Activated CD4-positive, alpha-beta T cell treated with anti-CD3 and anti-CD28 coated beads, Interleukin-2, amount 10 ng/mL, durations not matched to agents 24 days and 14 days (primary cell): ENCODE measurements at regions of chr21 and their contacts with region 1.

Region 1: DNA sequence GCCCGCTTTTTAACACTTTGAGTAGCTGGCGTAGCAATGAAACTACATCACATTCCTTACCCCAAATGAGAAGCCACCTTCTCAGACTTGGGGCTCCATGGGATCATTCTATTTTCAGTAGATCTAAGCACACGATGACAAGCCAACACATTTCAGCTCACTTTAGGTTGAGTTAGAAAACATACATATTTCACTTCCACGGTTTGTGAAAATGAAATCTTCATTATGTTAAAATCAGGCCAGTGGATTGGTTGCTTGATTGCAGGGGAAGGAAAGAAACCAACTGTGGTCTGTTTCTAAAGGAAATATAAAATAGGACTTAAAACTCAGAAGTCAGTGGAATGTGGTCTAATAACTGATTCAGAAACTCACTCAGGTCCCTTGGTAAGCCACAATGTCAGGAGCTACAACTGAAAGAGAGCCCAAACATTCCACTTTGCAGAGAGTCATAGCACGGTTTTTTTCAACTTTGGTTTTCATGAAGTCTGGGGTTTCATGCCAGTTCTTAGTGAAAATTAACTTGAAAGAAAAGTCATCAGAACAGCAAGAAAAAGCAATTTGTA is 82.3 kb upstream of the TIAM1 start:
- DNase-seq: peak; percentile 67
- H3K4me3 Mint-ChIP-seq: peak overlapping the region; percentile 26
- H3K27ac Mint-ChIP-seq: peak overlapping the region; percentile 66
- H3K4me1 Mint-ChIP-seq: peaks cover 16% of the 10 kb centered on the region
- H3K27me3 Mint-ChIP-seq: peaks cover 7% of the 10 kb centered on the region

Region 2: GRCh38 chr21:31326522-31327242 is 99.6 kb before region 1 on chr21:
- intact Hi-C with region 1: loop called (anchors 1 kb)
- DNase-seq: peak; percentile 80
- H3K4me3 Mint-ChIP-seq: peak overlapping the region; percentile 74
- H3K27ac Mint-ChIP-seq: peak overlapping the region; percentile 92
- H3K4me1 Mint-ChIP-seq: peaks cover 28% of the 10 kb centered on the region
- H3K27me3 Mint-ChIP-seq: no peaks in the 10 kb centered on the region

Region 3: DNA sequence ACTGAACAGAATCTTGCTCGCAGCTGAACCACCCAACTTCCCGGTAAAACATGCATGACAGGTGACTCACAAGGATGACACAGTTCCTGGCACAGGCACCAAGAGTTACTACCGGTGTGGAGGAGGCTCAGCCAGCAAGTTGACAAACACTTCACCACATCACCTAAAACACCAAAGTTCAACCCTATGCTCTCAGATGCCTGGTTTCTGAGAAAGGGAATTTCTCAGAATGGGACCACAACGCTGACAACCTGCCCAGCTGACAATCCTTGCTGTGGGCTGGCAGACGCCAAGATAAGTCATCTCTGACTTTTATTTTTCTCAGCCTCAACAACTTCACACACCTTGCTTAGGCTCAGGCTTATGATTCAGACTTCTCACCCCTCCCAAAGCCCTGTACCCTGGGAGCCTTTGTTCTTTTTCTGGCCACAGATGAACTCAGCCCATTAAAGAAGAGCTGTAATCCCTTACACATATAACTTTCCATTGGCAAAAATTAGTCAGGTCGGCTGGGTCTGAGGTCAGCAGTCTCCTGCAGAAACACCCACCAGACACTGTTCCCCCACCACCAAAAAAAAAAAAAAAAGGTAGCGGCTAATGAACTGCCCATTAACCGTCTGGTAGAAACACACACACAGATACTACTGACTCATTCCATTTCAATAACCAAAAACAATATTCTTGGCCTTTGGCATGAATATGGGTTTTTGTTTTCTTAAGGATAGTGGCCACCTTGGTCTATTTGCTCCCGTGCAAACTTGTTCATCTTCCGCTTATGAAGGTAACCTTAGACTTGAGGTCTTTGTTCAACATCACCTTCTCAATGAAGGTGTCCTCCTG is 71.5 kb before region 1 on chr21:
- intact Hi-C with region 1: loop called (anchors 1 kb)
- DNase-seq: peak; percentile 95
- H3K4me3 Mint-ChIP-seq: peak overlapping the region; percentile 44
- H3K27ac Mint-ChIP-seq: peak overlapping the region; percentile 87
- H3K4me1 Mint-ChIP-seq: peaks cover 40% of the 10 kb centered on the region
- H3K27me3 Mint-ChIP-seq: peaks cover 5% of the 10 kb centered on the region

Region 4: GRCh38 chr21:31446226-31446855 is 20.0 kb after region 1 on chr21:
- intact Hi-C with region 1: loop called (anchors 1 kb)
- DNase-seq: peak; percentile 87
- H3K4me3 Mint-ChIP-seq: peak overlapping the region; percentile 69
- H3K27ac Mint-ChIP-seq: peak overlapping the region; percentile 76
- H3K4me1 Mint-ChIP-seq: peaks cover 34% of the 10 kb centered on the region
- H3K27me3 Mint-ChIP-seq: peaks cover 4% of the 10 kb centered on the region

Region 5: GRCh38 chr21:31509194-31510017 is 83.1 kb after region 1 on chr21:
- intact Hi-C with region 1: loop called (anchors 2 kb)
- DNase-seq: peak; percentile 95
- H3K4me3 Mint-ChIP-seq: peak overlapping the region; percentile 63
- H3K27ac Mint-ChIP-seq: peak overlapping the region; percentile 38
- H3K4me1 Mint-ChIP-seq: peaks cover 33% of the 10 kb centered on the region
- H3K27me3 Mint-ChIP-seq: peaks cover 21% of the 10 kb centered on the region